Heart left ventricle (tissue), 16 donors: ENCODE measurements at regions of chrX and their contacts with region 1.

Region 1: DNA sequence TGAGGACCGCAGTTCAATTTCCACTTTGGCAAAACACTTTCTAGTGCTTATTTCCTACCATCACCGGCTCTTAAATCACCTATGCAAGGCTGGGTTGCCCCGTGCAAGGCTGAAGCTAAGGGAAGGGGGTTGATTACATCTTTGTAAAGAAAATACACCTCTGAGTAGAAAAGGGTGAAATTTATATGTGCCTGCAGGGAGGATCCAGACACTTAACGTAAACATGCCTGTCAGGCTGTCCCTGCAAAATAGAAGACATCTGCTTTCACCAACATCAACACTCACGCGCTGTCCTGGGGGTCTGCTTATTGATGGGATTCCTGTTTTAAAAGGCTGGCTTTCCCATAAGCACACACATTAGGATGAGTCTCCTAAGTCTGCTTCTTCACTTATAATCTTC is 92.0 kb downstream of the PRKX start:
- DNase-seq: no peak
- ATAC-seq: no peak
- H3K4me3 ChIP-seq: no peak overlapping the region
- H3K27ac ChIP-seq: no peak overlapping the region
- H3K4me1 ChIP-seq: no peaks in the 10 kb centered on the region
- H3K27me3 ChIP-seq: no peaks in the 10 kb centered on the region
- CTCF ChIP-seq: no peak
- POLR2A ChIP-seq: no peak

Region 2: GRCh38 chrX:3119376-3119775 is 502.0 kb before region 1 on chrX:
- intact Hi-C with region 1: loop called in 1 of 10 experiments (anchors 10 kb)
- DNase-seq: no peak
- ATAC-seq: no peak
- H3K4me3 ChIP-seq: no peak overlapping the region
- H3K27ac ChIP-seq: no peak overlapping the region
- H3K4me1 ChIP-seq: no peaks in the 10 kb centered on the region
- H3K27me3 ChIP-seq: no peaks in the 10 kb centered on the region
- CTCF ChIP-seq: no peak
- POLR2A ChIP-seq: no peak

Region 3: GRCh38 chrX:3638280-3638873 is 17.0 kb after region 1 on chrX:
- intact Hi-C with region 1: no loop called
- DNase-seq: peak in 3 of 5 donors; percentile 14 to 34 (median 17)
- ATAC-seq: no peak
- H3K4me3 ChIP-seq: no peak overlapping the region
- H3K27ac ChIP-seq: no peak overlapping the region
- H3K4me1 ChIP-seq: no peaks in the 10 kb centered on the region
- H3K27me3 ChIP-seq: no peaks in the 10 kb centered on the region
- CTCF ChIP-seq: peak; percentile 32 to 65 (median 54)
- POLR2A ChIP-seq: no peak

Region 4: DNA sequence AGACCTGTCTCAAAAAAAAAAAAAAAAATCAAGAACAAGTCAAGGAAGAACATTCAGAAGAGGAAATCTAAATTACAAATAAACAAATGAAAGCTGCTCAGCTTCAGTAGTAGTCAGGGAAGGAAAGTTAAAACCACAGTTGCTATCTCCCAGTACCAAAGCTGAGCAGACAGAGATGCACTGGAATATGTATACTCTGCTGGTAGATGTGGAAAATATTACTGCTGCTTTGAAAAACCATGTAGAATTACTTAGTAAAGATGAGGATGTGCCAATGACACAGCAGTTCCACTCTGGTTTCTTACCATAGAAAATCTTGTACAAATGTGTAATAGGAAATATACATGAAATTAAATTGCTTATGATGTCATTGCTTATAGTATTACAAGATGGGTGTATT is 117.1 kb after region 1 on chrX:
- intact Hi-C with region 1: no loop called
- DNase-seq: no peak
- ATAC-seq: no peak
- H3K4me3 ChIP-seq: no peak overlapping the region
- H3K27ac ChIP-seq: no peak overlapping the region
- H3K4me1 ChIP-seq: no peaks in the 10 kb centered on the region
- H3K27me3 ChIP-seq: peaks cover 0 to 2% (median 0%) of the 10 kb centered on the region in 9 donors
- CTCF ChIP-seq: no peak
- POLR2A ChIP-seq: no peak